ENCODE measurements at regions of chr16 and their contacts with region 1.

Region 1: GRCh38 chr16:30747799-30748634 is at the start of gene PHKG2:
- DNase-seq: peak; percentile 98 to 100
- H3K4me3 ChIP-seq: peak within 1 kb of the TSS; percentile 75
- H3K27ac ChIP-seq: peak within 1 kb of the TSS; percentile 53
- H3K4me1 ChIP-seq: peaks cover 13% of the 10 kb centered on the region
- H3K27me3 ChIP-seq: no peaks in the 10 kb centered on the region
- CTCF ChIP-seq: no peak
- total RNA-seq, gene PHKG2: 66.1 and 67.3 TPM in 2 replicates

Region 2: GRCh38 chr16:30761928-30762810 is 14.2 kb after region 1 on chr16 and contains the starts of genes CFAP119 and RNF40:
- CTCF ChIA-PET with region 1: no interaction called
- POLR2A ChIA-PET with region 1: no interaction called
- intact Hi-C with region 1: loop called (anchors 1 kb)
- DNase-seq: peak; percentile 96 to 99
- H3K4me3 ChIP-seq: peak within 1 kb of the TSS; percentile 83
- H3K27ac ChIP-seq: peak within 1 kb of the TSS; percentile 2; the same call in 1 of the 2 replicates
- H3K4me1 ChIP-seq: peaks cover 24% of the 10 kb centered on the region
- H3K27me3 ChIP-seq: no peaks in the 10 kb centered on the region
- CTCF ChIP-seq: no peak
- total RNA-seq, gene CFAP119: 17.9 and 19.9 TPM in 2 replicates
- total RNA-seq, gene RNF40: 149 and 178 TPM in 2 replicates